ENCODE measurements at regions of chr17 and their contacts with region 1.

Region 1: GRCh38 chr17:77054936-77055335 is 85.8 kb upstream of the SEC14L1 start:
- DNase-seq: no peak

Region 2: GRCh38 chr17:76868176-76868668 is 186.7 kb before region 1 on chr17 and contains the start of gene MGAT5B:
- CTCF ChIA-PET with region 1: interaction called, 20 read pairs
- POLR2A ChIA-PET with region 1: interaction called, 8 read pairs
- DNase-seq: peak; percentile 98

Region 3: GRCh38 chr17:77109764-77110359 is 54.9 kb after region 1 on chr17:
- CTCF ChIA-PET with region 1: no interaction called
- POLR2A ChIA-PET with region 1: no interaction called
- DNase-seq: no peak

Region 4: DNA sequence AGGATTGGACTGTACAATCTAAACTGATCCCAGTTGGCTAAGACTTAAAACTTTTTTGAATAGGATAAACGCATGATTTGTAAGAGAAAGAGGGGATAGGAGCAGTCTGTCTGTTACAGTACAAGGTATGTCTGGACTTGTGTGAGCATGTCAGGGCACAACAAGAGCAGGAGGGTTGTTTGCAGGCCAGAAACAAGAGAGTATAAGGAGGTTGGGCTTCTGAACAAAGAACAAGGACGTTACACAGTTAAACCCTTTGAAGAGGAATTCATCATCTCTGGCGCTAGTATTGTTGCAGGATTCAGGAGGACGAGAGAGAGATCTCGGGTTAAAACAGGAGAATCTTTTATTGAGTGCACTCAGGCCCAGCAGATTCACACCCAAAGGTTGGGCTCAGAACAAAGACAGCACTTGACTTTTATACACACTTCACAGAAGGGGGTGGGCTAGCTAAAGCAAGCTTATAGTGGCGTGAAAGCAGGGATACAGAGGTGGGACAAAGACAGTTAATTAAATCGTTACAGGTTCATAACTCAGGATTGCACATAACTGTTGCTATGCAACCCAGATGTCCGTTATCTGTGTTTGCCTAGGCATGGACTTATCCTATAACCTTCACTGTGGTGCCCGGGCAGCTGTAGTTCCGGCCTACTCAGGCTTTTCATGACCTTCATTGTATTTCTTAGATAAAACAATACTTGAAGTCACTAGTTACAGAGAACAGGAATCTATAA is 120.2 kb after region 1 on chr17:
- CTCF ChIA-PET with region 1: no interaction called
- POLR2A ChIA-PET with region 1: no interaction called
- DNase-seq: no peak

Measured in HEK293T (cell line).